Activated CD4-positive, alpha-beta memory T cell treated with anti-CD3 and anti-CD28 coated beads, Interleukin-2, amount 10 ng/mL, durations not matched to agents 7 days and 5 days (primary cell): ENCODE measurements at regions of chr15 and their contacts with region 1.

Region 1: DNA sequence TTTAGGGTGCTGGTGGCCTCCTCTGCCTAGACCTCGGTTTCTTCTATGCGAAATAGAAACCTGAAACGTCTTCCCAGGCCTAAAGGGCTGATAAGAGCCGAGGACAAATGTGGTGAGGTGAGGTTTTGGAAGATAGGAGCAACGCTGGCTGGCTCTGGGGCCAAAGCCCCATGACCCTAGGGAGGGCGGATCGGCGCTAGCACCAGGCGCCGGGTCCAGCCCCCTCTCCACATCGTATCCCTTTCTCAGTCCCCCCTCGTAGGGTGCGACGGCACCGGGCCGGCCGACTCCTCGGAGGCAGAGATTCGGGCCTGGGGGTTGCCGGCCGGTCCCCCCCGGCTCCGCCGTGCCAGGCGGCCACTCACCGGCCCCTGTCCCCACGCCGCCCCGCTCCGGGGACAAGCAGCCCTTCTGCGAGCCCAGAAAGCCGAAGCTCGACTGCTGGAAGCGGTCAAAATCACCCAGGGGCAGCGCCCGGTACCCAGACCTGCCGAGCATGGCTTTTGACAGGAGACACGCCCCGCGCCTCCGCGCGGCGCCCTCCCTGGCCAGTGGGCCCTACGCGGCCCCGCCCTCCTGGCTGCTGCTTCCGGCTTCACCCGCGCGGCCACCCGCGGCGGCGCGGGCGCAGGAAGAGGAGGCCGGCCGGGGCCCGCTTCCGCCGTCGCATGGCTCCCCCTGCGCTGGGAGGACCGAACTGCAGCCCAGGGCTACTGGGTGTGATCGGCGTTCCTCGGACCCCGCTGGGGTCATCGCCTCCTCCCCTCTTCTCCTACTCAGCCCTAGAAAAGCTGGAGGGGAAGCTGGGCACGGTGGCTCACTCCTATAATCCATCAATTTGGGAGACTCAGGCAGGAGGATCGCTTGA is at the start of gene STOML1:
- DNase-seq: peak; percentile 95
- H3K4me3 Mint-ChIP-seq: peak within 1 kb of the TSS; percentile 76
- H3K27ac Mint-ChIP-seq: peak within 1 kb of the TSS; percentile 80
- H3K4me1 Mint-ChIP-seq: peaks cover 47% of the 10 kb centered on the region
- H3K27me3 Mint-ChIP-seq: no peaks in the 10 kb centered on the region
- total RNA-seq, gene STOML1: 7.1 to 8.5 TPM

Region 2: GRCh38 chr15:74010929-74011540 is 19.1 kb after region 1 on chr15:
- CTCF ChIA-PET with region 1: interaction called, 7 read pairs
- POLR2A ChIA-PET with region 1: interaction called, 78 read pairs
- DNase-seq: no peak
- H3K4me3 Mint-ChIP-seq: no peak overlapping the region
- H3K27ac Mint-ChIP-seq: no peak overlapping the region
- H3K4me1 Mint-ChIP-seq: peaks cover 60% of the 10 kb centered on the region
- H3K27me3 Mint-ChIP-seq: no peaks in the 10 kb centered on the region

Region 3: GRCh38 chr15:74392451-74392830 is 400.5 kb after region 1 on chr15:
- CTCF ChIA-PET with region 1: no interaction called
- POLR2A ChIA-PET with region 1: no interaction called
- DNase-seq: no peak
- H3K4me3 Mint-ChIP-seq: no peak overlapping the region
- H3K27ac Mint-ChIP-seq: no peak overlapping the region
- H3K4me1 Mint-ChIP-seq: peaks cover 35% of the 10 kb centered on the region
- H3K27me3 Mint-ChIP-seq: no peaks in the 10 kb centered on the region